PC-3 (cell line): ENCODE measurements at regions of chr7 and their contacts with region 1.

Region 1: GRCh38 chr7:129367700-129368388 is 66.4 kb upstream of the STRIP2 start:
- DNase-seq: peak; percentile 86
- ATAC-seq: peak; percentile 93
- H3K4me3 ChIP-seq: peak overlapping the region; percentile 50
- H3K27ac ChIP-seq: peak overlapping the region; percentile 60
- H3K4me1 ChIP-seq: peaks cover 14% of the 10 kb centered on the region; the same call in 1 of the 2 replicates
- H3K27me3 ChIP-seq: no peaks in the 10 kb centered on the region
- CTCF ChIP-seq: peak; percentile 94

Region 2: DNA sequence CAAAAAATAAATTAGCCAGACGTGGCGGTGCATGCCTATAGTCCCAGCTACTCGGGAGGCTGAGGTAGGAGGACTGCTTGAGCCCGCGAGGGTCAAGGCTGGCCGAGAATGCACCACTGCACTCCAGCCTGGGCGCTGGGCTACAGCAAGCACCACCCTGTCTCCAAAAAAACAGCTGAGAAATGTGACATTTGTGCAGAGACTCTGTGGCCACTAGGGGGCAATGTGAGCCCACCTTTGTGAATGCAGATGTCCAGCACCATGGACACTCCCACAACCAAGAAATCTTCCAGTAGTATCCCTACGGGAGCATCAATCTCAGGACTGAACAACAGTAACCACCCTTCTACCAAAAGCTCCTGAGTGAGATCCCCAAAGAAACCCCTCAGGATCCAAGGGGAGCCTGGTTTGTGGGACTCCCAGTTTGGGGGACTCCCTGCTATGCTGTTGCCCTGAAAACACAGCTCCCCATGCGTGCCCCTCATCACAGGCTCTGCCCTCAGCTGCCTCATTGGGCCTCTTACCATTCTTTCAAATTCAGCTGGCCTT is 149.3 kb before region 1 on chr7:
- CTCF ChIA-PET with region 1: interaction called, 9 read pairs
- POLR2A ChIA-PET with region 1: no interaction called
- intact Hi-C with region 1: loop called (anchors 1 kb)
- DNase-seq: peak; percentile 86
- ATAC-seq: peak; percentile 95
- H3K4me3 ChIP-seq: peak overlapping the region; percentile 34; the same call in 1 of the 2 replicates
- H3K27ac ChIP-seq: no peak overlapping the region
- H3K4me1 ChIP-seq: peaks cover 5% of the 10 kb centered on the region; the same call in 1 of the 2 replicates
- H3K27me3 ChIP-seq: no peaks in the 10 kb centered on the region
- CTCF ChIP-seq: peak; percentile 89

Region 3: DNA sequence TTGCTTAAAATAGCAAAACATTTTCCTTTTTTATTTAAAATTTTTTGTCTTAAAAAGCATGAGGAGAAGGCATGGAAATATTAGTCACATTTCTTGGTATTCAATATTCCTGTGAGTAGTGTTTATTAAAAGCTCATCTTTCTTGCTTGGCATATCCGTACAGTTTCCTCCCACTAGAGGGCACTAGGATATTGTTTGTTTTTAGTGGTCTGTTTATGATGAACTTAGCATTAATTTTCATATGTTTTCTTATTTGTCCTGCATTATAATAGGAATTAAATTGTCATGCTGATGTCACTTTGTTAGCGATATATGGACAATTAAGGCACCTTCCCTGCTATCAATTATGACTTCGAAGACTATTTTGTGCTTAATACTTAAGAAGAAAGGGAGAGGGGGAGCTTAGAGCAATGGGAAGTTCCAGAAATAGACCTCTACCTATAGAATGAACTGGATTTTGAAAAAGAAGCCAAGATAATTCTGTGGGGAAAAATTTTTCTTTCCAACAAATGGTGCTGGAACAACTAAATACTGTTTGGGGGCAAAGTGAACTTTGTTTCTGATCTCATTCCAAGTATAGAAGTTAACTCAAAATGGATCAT is 24.6 kb before region 1 on chr7:
- CTCF ChIA-PET with region 1: interaction called, 25 read pairs
- POLR2A ChIA-PET with region 1: no interaction called
- intact Hi-C with region 1: no loop called
- DNase-seq: peak; percentile 68
- ATAC-seq: peak; percentile 85
- H3K4me3 ChIP-seq: no peak overlapping the region
- H3K27ac ChIP-seq: no peak overlapping the region
- H3K4me1 ChIP-seq: no peaks in the 10 kb centered on the region; the same call in none of the 2 replicates
- H3K27me3 ChIP-seq: no peaks in the 10 kb centered on the region
- CTCF ChIP-seq: peak; percentile 86

Region 4: DNA sequence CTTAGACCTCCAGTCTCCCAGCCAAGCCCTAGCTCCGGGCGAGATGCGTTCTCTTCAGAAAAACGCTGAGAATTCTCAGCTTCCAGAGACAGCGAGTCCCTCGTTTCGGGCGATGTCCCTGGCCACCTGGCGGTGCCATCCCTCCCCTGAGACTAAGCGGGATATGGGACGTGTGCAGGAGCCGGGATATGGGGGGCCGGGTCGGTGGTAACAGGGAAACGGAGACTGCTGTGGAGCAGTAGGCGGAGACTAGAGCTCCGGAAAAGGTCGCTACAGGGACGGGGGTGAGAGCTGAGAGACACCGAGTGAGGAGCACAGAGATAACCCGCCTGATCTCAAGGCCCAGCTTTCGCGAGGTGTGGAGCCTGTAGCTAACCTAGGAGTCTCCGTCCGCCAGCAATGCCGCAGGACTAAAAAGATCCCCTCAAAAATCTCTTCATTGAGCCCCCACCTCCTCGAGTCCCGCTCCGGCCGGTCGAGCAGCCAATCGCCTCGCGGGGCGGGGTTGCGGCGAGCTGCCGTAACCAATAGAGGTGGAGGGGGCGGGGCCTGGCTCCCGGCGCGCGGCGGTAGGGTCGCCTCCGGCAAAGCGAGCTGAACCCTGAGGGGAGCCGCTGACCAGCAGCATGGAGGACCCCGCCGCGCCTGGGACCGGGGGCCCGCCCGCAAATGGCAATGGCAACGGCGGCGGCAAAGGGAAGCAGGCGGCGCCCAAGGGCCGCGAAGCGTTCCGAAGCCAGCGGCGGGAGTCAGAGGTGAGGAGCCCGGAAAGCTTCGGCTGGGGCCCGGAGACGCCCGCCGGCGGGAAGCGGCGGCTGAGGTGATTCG is 66.2 kb after region 1 on chr7 and contains the start of gene STRIP2:
- CTCF ChIA-PET with region 1: interaction called, 8 read pairs
- POLR2A ChIA-PET with region 1: interaction called, 3 read pairs
- intact Hi-C with region 1: loop called (anchors 1 kb)
- DNase-seq: peak; percentile 82
- ATAC-seq: peak; percentile 79
- H3K4me3 ChIP-seq: peak within 1 kb of the TSS; percentile 77
- H3K27ac ChIP-seq: no peak within 1 kb of the TSS
- H3K4me1 ChIP-seq: peaks cover 32% of the 10 kb centered on the region
- H3K27me3 ChIP-seq: no peaks in the 10 kb centered on the region
- CTCF ChIP-seq: peak; percentile 20; the same call in 1 of the 2 replicates
- total RNA-seq, gene STRIP2: 7.5 and 8.0 TPM in 2 replicates

Region 5: DNA sequence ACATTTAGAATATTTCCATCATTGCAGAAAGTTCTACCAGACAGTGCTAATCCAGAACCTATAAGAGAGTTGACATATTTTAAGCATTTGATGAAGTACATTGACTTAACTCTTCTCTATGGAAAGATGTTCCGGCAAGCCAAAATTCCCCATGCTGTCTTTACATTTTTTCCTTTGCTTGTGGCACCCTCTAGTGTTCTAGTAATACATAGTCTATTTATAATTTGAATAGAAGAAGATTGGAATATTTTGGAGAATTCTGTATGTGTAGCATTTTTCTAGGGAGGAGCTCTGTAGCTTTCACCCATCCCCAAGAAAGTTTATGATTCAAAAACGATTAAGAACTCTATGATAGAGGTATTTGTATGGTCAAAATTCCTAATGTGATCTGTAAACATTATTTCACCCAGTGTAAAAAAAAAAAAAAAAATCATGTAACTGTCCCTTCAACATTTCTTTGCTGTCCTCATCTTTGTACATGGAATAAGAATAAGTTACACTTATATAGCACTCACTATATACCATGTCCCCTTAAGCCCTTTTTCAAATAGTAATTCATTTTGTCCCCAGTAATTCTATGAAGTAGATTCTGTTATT is 276.9 kb after region 1 on chr7:
- CTCF ChIA-PET with region 1: interaction called, 10 read pairs
- POLR2A ChIA-PET with region 1: no interaction called
- intact Hi-C with region 1: loop called (anchors 1 kb)
- DNase-seq: peak; percentile 67
- ATAC-seq: no peak; the same call in 1 of the 2 replicates
- H3K4me3 ChIP-seq: no peak overlapping the region
- H3K27ac ChIP-seq: no peak overlapping the region
- H3K4me1 ChIP-seq: peaks cover 38% of the 10 kb centered on the region
- H3K27me3 ChIP-seq: no peaks in the 10 kb centered on the region
- CTCF ChIP-seq: peak; percentile 70